Sciatic nerve (tissue), 2 donors: ENCODE measurements at regions of chr4 and their contacts with region 1.

Region 1: GRCh38 chr4:26235500-26235899 is 85.3 kb upstream of the RBPJ start:
- DNase-seq: peak; percentile 67
- ATAC-seq: peak; percentile 76

Region 2: DNA sequence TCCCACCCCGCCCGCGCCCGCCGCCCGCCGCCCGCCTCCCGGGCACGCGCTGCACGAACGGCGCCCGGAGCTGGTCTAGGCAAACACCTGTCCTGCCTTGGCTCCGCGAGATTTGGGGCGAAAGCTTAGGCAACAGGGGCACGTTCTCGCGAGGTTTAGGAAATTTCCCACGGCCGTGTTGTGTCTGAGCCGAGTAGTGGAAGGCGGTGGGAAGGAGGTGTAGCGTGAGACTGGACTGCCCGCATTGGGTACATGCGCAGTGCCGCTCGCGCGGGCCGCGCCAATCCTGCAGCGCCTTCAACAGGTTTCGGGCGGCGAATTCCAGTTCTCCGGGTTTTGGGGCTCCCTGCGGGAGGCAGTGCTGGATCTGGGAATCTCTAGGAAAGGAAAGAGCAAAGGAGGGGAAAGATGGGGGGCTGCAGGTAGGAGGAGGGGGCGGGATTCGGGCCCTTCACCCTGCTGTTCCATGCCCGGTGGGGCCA is 84.0 kb after region 1 on chr4:
- intact Hi-C with region 1: loop called (anchors 10 kb)
- DNase-seq: peak; percentile 98
- ATAC-seq: peak; percentile 95